Transverse colon (tissue), 4 donors: ENCODE measurements at regions of chr9 and their contacts with region 1.

Region 1: DNA sequence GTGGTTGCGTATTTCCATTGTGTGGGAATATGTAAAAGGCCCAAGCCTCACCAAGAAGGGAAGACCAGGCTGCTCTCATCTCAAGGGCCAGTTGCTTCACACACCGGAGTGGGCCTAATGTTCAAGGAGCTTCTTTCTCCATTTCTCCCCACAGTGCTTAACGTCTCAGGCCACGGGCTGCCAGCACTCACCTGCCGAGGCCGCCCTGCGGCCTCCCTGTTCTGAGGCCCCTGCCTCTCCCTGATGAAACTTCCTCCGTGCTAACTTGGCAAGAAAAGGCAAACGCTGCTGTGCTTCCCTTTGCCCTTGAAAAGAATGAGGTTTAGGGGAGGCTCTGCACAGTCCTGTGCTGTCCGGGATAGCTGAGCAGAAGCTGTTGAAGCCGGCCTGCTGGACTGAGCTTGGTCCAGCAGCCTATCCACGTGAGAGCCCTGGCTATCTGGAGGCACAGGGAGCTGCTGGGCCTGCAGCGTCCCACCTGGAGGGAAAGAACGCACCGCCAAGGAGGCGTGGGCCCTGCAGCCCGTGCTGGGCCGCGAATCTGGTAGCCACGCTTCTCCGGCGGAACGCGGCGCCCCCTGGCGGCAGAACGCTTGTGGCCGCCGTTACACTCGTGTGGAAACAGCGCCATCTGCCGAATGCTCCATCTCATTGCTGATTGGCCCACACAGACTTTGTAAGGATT is 73.5 kb upstream of the PRSS3 start:
- DNase-seq: peak; percentile 90
- H3K4me3 ChIP-seq: no peak overlapping the region
- H3K27ac ChIP-seq: no peak overlapping the region
- H3K4me1 ChIP-seq: peaks cover 0 to 4% (median 1%) of the 10 kb centered on the region in 4 donors
- H3K27me3 ChIP-seq: peaks cover 11% of the 10 kb centered on the region
- CTCF ChIP-seq: peak; percentile 99 to 100 (median 100)
- EP300 ChIP-seq: no peak
- POLR2A ChIP-seq: no peak

Region 2: GRCh38 chr9:33623658-33624586 is 97.9 kb before region 1 on chr9:
- in situ Hi-C with region 1: loop called in 2 of 4 experiments (anchors 10 kb)
- intact Hi-C with region 1: loop called (anchors 2 kb)
- DNase-seq: peak; percentile 62
- H3K4me3 ChIP-seq: no peak overlapping the region
- H3K27ac ChIP-seq: no peak overlapping the region
- H3K4me1 ChIP-seq: no peaks in the 10 kb centered on the region
- H3K27me3 ChIP-seq: no peaks in the 10 kb centered on the region
- CTCF ChIP-seq: peak; percentile 81 to 85 (median 84)
- EP300 ChIP-seq: no peak
- POLR2A ChIP-seq: no peak

Region 3: DNA sequence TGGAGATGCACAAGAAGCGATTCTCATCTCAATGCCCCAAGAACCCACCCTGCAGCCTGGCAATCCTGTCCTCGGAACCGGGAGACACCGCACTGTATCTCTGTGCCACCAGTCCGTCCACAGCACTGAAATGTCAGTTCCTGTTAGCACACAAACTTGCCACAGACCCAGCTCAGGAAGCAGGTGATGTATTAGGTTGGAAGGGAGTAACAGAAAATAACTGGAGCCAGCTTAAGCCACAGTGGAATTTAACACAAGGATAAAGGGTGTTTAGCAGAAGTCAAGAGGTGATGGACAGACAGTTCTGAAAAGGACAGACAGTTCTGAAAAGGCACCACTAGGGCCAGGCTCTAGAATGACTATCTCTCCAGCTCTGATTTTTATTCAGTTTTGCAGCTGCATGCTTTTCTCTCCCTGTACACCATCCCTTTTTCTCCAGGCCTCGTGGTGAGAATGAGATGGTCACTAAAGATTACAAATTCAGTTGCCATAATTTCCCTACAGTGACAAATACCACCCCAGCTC is 83.4 kb before region 1 on chr9:
- in situ Hi-C with region 1: loop called in 2 of 4 experiments (anchors 5 to 10 kb)
- intact Hi-C with region 1: no loop called
- DNase-seq: no peak
- H3K4me3 ChIP-seq: no peak overlapping the region
- H3K27ac ChIP-seq: no peak overlapping the region
- H3K4me1 ChIP-seq: no peaks in the 10 kb centered on the region
- H3K27me3 ChIP-seq: peaks cover 77% of the 10 kb centered on the region
- CTCF ChIP-seq: no peak
- EP300 ChIP-seq: no peak
- POLR2A ChIP-seq: no peak

Region 4: DNA sequence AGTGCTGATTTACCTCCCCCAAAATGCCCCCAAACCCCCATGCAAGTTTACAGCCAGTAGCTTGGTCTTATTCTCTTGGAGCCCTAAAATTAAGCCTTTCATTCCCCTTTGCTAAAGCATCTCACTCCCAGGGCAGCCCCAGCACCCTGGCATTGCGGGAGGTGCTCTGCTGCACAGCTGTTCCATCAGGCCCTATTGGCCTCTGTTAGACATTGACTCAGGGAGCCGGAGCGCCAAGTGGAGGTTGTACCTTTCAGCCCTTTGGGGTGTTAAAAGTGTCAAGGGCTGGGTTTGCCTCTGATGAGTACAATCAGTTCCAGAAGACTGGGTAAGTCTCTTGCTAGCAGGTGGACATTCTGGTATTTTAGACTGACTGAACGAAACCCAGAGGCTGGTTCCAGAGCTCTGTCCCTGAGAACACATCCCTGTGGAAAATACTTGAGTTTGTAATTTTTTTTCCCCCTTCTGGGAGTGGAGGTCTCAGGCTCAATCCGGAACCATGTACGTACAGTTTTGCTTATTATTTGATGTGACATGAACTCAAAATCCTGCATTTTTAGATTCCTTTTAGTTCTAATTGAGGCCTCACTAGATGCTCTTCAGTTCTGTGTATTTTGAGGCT is 197.6 kb after region 1 on chr9:
- in situ Hi-C with region 1: no loop called
- intact Hi-C with region 1: no loop called
- DNase-seq: no peak
- H3K4me3 ChIP-seq: no peak overlapping the region
- H3K27ac ChIP-seq: no peak overlapping the region
- H3K4me1 ChIP-seq: no peaks in the 10 kb centered on the region
- H3K27me3 ChIP-seq: no peaks in the 10 kb centered on the region
- CTCF ChIP-seq: no peak
- EP300 ChIP-seq: no peak
- POLR2A ChIP-seq: no peak

Region 5: DNA sequence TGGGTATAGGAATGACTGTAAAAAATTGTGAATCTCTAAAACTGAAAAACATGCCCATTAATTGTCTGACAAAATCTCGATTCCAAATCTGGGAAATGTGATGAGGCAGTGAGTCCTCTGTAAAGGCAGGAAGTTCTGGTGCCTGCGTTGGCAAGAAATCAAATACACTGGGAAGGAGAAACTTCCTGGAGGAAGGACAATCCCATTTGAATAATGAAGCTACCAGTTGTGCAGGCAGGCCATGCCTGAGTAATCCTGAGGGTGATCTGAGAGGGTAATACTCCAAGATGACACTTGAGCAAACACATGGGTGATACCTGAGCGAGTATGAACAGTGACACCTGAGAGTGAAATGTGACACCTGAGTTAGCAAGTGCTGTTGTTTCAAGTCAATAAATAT is 557.6 kb after region 1 on chr9:
- in situ Hi-C with region 1: no loop called
- intact Hi-C with region 1: no loop called
- DNase-seq: no peak
- H3K4me3 ChIP-seq: no peak overlapping the region
- H3K27ac ChIP-seq: no peak overlapping the region
- H3K4me1 ChIP-seq: no peaks in the 10 kb centered on the region
- H3K27me3 ChIP-seq: no peaks in the 10 kb centered on the region
- CTCF ChIP-seq: no peak
- EP300 ChIP-seq: no peak
- POLR2A ChIP-seq: no peak